ENCODE measurements at regions of chr2 and their contacts with region 1.

Region 1: DNA sequence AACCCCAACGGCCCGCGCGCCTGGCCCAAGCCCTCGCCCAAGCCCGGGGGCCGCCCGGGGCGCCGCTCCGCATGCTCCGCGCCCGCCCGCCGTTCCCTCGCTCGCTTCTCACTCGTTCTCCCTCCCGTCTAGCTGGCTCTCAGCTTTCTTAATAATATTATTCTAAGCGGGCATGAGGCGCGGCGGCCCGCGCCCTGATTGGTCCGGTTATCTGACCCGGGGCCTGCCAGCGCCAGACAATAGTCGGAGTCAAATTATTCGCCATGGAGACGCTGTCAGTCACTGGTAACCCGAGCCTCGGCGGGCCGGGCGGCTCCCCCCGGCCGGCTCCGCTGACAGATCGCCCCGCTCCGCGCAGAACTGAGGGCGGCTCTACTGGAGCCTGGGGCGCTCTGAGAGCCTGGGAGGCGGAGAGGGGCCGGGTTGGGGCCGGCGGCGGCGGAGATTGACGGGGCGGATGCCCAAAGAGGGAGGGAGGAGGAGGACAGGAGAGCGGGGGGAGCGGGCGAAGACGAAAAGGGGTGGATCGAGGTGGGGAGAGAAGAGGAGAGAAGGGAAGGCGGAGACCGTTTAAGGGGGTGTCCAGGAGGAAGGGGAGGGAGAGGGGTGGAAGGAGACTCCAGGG is at the start of gene SIX2:
- DNase-seq: peak; percentile 64
- H3K4me3 Mint-ChIP-seq: peak within 1 kb of the TSS; percentile 80
- H3K27ac Mint-ChIP-seq: no peak within 1 kb of the TSS
- H3K4me1 Mint-ChIP-seq: peaks cover 11% of the 10 kb centered on the region
- H3K27me3 Mint-ChIP-seq: peaks cover 77% of the 10 kb centered on the region
- total RNA-seq, gene SIX2: not detected in 2 replicates

Region 2: DNA sequence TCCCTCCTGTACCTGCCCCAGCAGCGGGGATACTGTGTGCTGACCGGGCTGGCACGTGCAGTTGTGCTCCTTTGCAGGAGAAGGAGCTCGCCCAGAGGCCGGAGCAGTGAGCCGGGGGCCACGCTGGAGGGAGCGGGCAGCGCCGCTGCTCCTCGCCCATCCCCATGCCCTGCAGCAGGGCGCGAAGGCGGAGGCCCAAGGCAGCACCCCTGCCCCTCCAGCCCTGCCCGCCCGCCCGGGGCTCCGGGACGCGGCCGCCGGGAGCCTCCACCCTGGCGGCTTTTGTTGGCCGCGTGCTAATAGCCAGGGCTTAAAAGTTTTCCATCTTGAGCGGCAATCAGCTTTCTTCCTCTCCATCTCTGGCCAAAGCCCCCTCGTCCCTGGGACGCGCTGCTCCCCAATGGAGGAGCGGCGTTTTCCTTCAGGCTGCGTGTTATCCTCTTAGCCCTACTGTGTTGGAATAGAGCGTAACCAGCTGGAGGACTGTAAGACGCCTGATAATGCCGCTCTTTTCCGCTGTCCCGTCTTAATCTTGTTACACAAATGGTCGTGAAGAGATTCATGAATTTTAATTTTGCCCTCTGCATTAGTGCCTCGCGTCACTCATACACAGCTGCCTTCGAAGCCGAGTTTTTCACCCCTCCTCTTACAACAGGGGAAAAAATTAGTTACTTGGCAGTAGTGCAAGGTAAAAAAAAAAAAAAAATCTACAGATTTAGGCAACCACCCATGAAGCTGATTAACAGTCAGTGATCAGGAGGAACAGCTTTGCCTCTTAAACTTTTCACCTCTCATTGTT is 240.8 kb before region 1 on chr2:
- intact Hi-C with region 1: no loop called
- DNase-seq: no peak
- H3K4me3 Mint-ChIP-seq: no peak overlapping the region
- H3K27ac Mint-ChIP-seq: no peak overlapping the region
- H3K4me1 Mint-ChIP-seq: peaks cover 3% of the 10 kb centered on the region
- H3K27me3 Mint-ChIP-seq: peaks cover 29% of the 10 kb centered on the region

Region 3: GRCh38 chr2:44802777-44803424 is 206.5 kb before region 1 on chr2:
- intact Hi-C with region 1: loop called (anchors 5 kb)
- DNase-seq: no peak
- H3K4me3 Mint-ChIP-seq: no peak overlapping the region
- H3K27ac Mint-ChIP-seq: no peak overlapping the region
- H3K4me1 Mint-ChIP-seq: no peaks in the 10 kb centered on the region
- H3K27me3 Mint-ChIP-seq: peaks cover 87% of the 10 kb centered on the region

Region 4: GRCh38 chr2:44941551-44942234 is 67.7 kb before region 1 on chr2 and contains the start of gene SIX3:
- intact Hi-C with region 1: loop called (anchors 2 kb)
- DNase-seq: peak; percentile 82
- H3K4me3 Mint-ChIP-seq: peak within 1 kb of the TSS; percentile 81
- H3K27ac Mint-ChIP-seq: peak within 1 kb of the TSS; percentile 67
- H3K4me1 Mint-ChIP-seq: peaks cover 14% of the 10 kb centered on the region
- H3K27me3 Mint-ChIP-seq: peaks cover 79% of the 10 kb centered on the region
- total RNA-seq, gene SIX3: not detected in 2 replicates

Region 5: DNA sequence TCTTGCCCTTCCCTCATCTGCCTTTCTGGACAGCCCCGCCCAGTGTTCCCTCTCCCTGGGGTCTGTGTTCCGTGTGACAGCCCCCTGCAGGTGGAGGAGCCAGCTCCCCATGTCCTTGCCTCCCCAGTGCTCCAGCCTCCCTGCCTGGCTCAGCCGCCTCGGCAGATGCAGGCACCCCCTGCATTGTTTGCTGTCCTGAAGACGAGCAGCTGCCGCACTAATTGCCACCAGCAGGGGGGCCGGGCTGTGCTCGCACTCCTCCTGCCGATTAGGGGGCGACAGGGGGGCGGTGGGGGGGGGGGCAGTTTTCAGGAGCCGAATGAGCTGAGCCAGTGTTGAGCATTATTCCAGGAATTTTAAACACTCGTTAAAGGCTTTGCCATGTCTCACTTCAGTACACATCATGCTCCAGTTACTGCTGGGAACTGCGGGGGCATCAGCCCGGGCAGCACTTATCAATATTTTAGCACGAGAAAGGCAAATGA is 44.6 kb before region 1 on chr2:
- intact Hi-C with region 1: no loop called
- DNase-seq: no peak
- H3K4me3 Mint-ChIP-seq: no peak overlapping the region
- H3K27ac Mint-ChIP-seq: no peak overlapping the region
- H3K4me1 Mint-ChIP-seq: no peaks in the 10 kb centered on the region
- H3K27me3 Mint-ChIP-seq: peaks cover 18% of the 10 kb centered on the region

Region 6: GRCh38 chr2:45244928-45245327 is 235.5 kb after region 1 on chr2:
- intact Hi-C with region 1: no loop called
- DNase-seq: no peak
- H3K4me3 Mint-ChIP-seq: no peak overlapping the region
- H3K27ac Mint-ChIP-seq: no peak overlapping the region
- H3K4me1 Mint-ChIP-seq: no peaks in the 10 kb centered on the region
- H3K27me3 Mint-ChIP-seq: peaks cover 20% of the 10 kb centered on the region

Measured in activated CD4-positive, alpha-beta T cell treated with anti-CD3 and anti-CD28 coated beads, Interleukin-2, amount 10 ng/mL, durations not matched to agents 24 days and 14 days (primary cell).